ENCODE measurements at regions of chr9 and their contacts with region 1.

Region 1: DNA sequence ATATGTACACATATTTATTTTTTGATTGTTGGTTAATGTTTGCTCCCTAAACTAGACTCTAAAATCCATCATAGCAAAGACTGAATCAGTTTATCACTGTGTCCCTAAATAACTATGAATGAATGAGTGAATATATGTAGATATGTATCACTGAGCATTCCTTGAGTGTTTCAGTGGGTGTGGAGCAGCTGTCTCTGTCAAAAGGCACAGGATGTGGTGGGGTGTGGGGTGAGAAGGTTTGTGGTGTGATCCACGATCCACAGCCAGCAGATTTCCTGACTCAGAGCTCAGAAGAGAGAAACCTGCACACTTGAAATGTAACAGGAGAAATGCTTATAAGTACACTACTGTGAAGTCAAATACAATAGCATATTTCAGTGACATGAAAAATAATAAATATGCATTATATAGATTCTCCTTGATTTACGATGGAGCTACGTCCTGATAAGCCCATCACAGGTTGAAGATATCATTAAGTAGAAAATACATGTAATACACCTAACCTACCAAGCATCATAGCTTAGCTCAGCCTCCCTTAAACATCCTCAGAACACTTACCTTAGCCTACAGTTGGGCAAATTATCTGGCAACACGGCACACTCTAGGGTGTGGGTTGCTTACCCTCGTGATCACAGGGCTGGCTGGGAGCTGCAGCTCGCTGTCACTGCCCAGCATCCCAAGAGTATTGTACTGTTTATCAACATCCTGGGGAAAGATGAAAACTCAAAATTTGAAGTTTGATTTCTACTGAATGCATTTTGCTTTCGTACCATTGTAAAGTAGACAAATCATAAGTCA is 287.0 kb downstream of the GAS1 start:
- ATAC-seq: peak in 3 of 8 experiments; percentile 97 to 98 (median 98)
- H3K4me3 ChIP-seq: no peak overlapping the region
- H3K27ac ChIP-seq: no peak overlapping the region
- H3K4me1 ChIP-seq: no peaks in the 10 kb centered on the region

Region 2: DNA sequence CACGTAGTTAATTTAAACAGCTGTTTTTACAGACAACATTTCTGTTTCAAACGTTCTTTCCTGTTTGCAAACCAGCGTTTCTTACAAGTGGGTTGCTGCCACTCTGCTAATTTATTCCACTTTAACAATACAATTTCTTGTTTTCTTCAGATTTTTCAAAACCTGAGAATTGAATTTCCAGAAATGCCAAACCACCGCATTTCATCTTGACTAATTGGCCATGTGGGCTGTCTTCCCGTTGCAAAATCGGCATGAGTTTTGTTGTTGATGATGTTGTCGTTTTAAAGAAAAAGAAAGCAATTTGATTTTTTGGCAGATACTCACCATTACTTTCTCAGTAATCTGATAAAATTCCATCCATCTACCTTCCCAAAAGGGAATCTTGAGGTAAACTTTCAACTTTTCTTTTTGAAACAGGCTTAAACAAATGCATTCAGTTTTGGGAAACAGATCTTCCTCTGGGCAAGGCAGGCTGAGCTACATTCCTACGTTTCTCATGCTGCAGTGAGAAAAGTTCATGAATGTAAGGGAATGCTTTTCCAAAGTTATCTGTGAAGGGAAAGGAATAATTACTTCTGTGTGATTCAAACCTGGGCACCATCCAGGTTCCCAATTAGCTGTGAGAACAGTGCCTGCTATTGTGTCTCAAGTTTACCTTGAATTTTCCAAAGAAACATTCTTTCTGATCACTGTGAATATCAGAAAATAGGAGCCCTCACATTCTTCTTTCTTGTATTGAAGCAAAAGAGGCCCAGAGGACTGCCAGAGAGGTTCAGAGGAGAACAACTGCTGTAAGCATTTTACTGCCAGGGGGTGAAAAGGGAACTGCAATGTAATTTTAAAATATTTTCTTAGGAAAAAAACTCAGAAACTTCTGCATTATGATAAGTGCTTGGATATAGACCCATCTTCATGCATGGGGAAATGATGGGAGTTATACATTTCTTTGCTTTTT is 205.4 kb before region 1 on chr9:
- in situ Hi-C with region 1: no loop called
- ATAC-seq: peak in 1 of 8 experiments; percentile 16
- H3K4me3 ChIP-seq: no peak overlapping the region
- H3K27ac ChIP-seq: no peak overlapping the region
- H3K4me1 ChIP-seq: no peaks in the 10 kb centered on the region

Region 3: GRCh38 chr9:86948074-86948929 is 288.0 kb after region 1 on chr9:
- in situ Hi-C with region 1: loop called in 1 of 9 experiments (anchors 25 kb)
- ATAC-seq: peak; percentile 13 to 40 (median 31)
- H3K4me3 ChIP-seq: peak overlapping the region; percentile 45 to 84 (median 63)
- H3K27ac ChIP-seq: peak overlapping the region in 1 of 2 donors; percentile 11
- H3K4me1 ChIP-seq: peaks cover 6 to 9% of the 10 kb centered on the region in 2 donors